OCI-LY7 (cell line): ENCODE measurements at regions of chr15 and their contacts with region 1.

Region 1: GRCh38 chr15:42137431-42138261 is 18.8 kb downstream of the PLA2G4F start:
- DNase-seq: peak; percentile 66
- H3K4me3 ChIP-seq: no peak overlapping the region
- H3K27ac ChIP-seq: no peak overlapping the region
- H3K4me1 ChIP-seq: no peaks in the 10 kb centered on the region
- CTCF ChIP-seq: peak; percentile 92

Region 2: DNA sequence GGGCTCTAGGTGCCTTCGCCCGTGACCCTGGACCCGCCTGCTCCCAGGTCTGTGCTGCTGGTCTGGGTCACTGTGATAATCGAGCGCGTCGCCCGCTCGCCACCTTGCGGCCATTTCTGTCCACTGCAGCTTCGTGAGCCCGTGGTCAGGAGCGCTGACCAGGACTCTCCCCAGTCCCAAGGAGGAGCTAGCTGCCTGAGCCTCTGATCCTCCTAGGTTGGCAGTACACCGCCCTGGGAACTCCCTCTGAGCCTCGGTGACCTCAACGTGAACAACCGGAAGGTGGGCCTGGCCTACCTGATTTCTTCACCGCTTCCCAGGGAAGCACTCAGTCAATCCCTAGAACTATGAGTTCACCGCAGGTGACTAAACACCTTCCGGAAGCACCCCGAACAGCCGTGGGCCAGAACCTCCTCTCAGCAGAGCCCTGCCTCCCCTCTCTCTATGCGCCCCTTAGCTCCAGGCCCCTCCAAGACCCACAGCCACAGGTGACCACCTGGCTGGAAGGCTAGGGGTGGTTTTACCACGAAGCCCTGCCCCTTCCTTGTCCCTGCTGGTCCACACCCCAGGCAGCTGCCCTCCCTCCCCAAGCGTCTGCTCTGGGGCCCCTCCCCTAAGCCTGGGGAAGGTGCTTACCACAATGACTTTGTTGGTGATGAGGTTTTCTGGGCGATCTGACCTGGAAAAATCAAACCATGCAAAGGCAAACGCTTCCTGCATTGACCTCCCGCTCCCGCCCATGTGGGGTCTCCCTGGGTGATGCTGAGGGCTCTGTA is 53.0 kb before region 1 on chr15:
- CTCF ChIA-PET with region 1: interaction called, 3 read pairs
- POLR2A ChIA-PET with region 1: no interaction called
- intact Hi-C with region 1: loop called (anchors 5 kb)
- DNase-seq: peak; percentile 54
- H3K4me3 ChIP-seq: no peak overlapping the region
- H3K27ac ChIP-seq: no peak overlapping the region
- H3K4me1 ChIP-seq: no peaks in the 10 kb centered on the region
- CTCF ChIP-seq: peak; percentile 89

Region 3: GRCh38 chr15:42385206-42385979 is 247.7 kb after region 1 on chr15:
- CTCF ChIA-PET with region 1: interaction called, 3 read pairs
- POLR2A ChIA-PET with region 1: no interaction called
- intact Hi-C with region 1: loop called (anchors 2 kb)
- DNase-seq: peak; percentile 73
- H3K4me3 ChIP-seq: no peak overlapping the region
- H3K27ac ChIP-seq: no peak overlapping the region
- H3K4me1 ChIP-seq: peaks cover 7% of the 10 kb centered on the region
- CTCF ChIP-seq: peak; percentile 95